ENCODE measurements at regions of chr12 and their contacts with region 1.

Region 1: DNA sequence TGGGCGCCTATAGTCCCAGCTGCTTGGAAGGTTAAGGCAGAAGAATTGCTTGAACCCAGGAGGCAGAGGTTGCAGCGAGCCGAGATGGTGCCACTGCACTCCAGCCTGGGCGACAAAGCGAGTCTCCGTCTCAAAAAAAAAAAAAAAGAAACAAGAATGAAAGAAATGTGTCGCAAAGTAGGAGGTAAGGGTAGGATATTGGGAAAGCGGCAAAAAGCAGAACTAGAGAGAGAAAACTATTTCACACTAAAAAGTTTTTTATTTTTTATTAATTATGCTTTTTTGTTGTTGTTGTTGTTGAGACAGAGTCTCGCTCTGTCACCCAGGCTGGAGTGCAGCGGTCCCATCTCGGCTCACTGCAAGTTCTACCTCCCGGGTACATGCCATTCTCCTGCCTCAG is 17.7 kb downstream of the SBNO1 start:
- DNase-seq: no peak
- H3K4me3 ChIP-seq: no peak overlapping the region
- H3K27ac ChIP-seq: no peak overlapping the region
- H3K4me1 ChIP-seq: peaks cover 0 to 10% (median 4%) of the 10 kb centered on the region in 4 donors
- H3K27me3 ChIP-seq: no peaks in the 10 kb centered on the region
- CTCF ChIP-seq: no peak
- EP300 ChIP-seq: no peak
- POLR2A ChIP-seq: no peak

Region 2: GRCh38 chr12:123293178-123293760 is 53.7 kb before region 1 on chr12:
- intact Hi-C with region 1: loop called (anchors 10 kb)
- DNase-seq: no peak
- H3K4me3 ChIP-seq: no peak overlapping the region
- H3K27ac ChIP-seq: no peak overlapping the region
- H3K4me1 ChIP-seq: no peaks in the 10 kb centered on the region
- H3K27me3 ChIP-seq: no peaks in the 10 kb centered on the region
- CTCF ChIP-seq: no peak
- EP300 ChIP-seq: no peak
- POLR2A ChIP-seq: no peak

Region 3: DNA sequence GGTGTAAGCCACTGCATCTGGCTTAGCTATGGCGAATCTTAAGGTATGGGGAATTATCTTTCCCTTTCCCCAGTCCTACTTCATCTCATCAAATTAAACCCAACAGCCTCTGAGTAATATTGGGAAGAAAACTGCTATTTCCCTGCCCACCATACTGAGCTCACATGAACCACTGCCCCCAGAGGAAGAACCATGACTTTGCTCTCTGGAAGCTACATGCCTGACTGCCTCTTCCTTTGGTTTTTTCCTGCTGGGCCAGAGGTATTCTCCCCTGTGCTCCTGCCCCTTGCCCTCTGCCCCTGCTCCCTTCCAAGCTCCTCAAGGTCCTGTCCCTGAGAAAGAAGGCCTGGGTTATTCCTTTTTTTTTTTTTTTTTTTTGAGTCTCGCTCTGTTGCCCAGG is 74.4 kb after region 1 on chr12:
- intact Hi-C with region 1: no loop called
- DNase-seq: no peak
- H3K4me3 ChIP-seq: no peak overlapping the region
- H3K27ac ChIP-seq: no peak overlapping the region
- H3K4me1 ChIP-seq: no peaks in the 10 kb centered on the region
- H3K27me3 ChIP-seq: no peaks in the 10 kb centered on the region
- CTCF ChIP-seq: no peak
- EP300 ChIP-seq: no peak
- POLR2A ChIP-seq: no peak

Measured in esophagus muscularis mucosa (tissue), 4 donors.